ENCODE measurements at regions of chr10 and their contacts with region 1.

Region 1: DNA sequence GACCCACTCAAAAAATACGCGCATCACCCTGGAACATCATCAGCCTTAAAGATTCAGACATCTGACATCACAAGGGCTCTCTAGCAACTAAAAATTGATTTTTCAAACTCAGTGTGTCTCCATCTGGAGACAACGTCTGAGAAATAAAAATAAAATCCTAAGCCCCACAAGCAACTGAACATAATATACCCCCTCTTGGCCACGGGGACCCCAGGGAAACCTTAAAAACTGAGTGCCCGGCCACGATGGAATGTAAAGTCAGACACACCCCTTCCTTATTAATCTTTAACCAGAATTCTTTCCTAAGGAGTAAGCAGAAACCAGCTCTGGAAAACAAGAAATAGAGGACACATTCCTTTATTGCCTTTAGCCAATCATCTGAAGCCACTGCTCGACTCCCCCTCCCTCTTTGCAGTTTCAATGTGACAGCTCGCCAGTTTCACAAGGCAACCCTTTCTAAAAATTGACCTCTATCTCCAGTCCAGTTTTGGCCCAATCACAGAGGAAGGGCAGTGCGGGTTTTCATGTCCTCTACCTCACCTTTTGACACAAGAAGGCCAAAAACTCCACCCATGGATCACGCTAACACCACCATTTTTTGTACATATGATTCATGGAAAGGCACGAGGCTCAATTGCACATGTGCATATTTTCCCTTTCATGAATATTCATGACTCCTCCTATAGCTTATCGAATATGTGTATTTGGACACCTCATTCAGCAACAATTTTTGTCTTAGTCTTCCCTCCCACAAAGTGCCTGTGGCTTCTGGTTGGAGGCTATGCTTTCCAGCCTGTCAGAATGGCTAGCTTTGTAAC is 24.2 kb downstream of the IFIT3 start:
- DNase-seq: no peak
- ATAC-seq: no peak
- H3K4me3 Mint-ChIP-seq: no peak overlapping the region
- H3K27ac Mint-ChIP-seq: no peak overlapping the region
- H3K4me1 Mint-ChIP-seq: peaks cover 27% of the 10 kb centered on the region
- H3K27me3 Mint-ChIP-seq: peaks cover 28% of the 10 kb centered on the region

Region 2: GRCh38 chr10:88493691-88494483 is 858.1 kb before region 1 on chr10:
- CTCF ChIA-PET with region 1: no interaction called
- DNase-seq: no peak
- ATAC-seq: no peak
- H3K4me3 Mint-ChIP-seq: no peak overlapping the region
- H3K27ac Mint-ChIP-seq: no peak overlapping the region
- H3K4me1 Mint-ChIP-seq: peaks cover 20% of the 10 kb centered on the region
- H3K27me3 Mint-ChIP-seq: no peaks in the 10 kb centered on the region

Region 3: GRCh38 chr10:89369156-89370105 is 17.4 kb after region 1 on chr10:
- CTCF ChIA-PET with region 1: interaction called, 10 read pairs
- DNase-seq: peak; percentile 47
- ATAC-seq: peak; percentile 51
- H3K4me3 Mint-ChIP-seq: no peak overlapping the region
- H3K27ac Mint-ChIP-seq: no peak overlapping the region
- H3K4me1 Mint-ChIP-seq: peaks cover 28% of the 10 kb centered on the region
- H3K27me3 Mint-ChIP-seq: peaks cover 27% of the 10 kb centered on the region

Measured in activated CD8-positive, alpha-beta memory T cell treated with anti-CD3 and anti-CD28 coated beads, Interleukin-2, amount 10 ng/mL, durations not matched to agents 7 days and 5 days (primary cell).